ENCODE measurements at regions of chr6 and their contacts with region 1.

Region 1: GRCh38 chr6:106181664-106182418 is 95.7 kb downstream of the PRDM1 start:
- DNase-seq: peak in 1 of 2 experiments; percentile 33
- H3K4me3 ChIP-seq: no peak overlapping the region
- H3K27ac ChIP-seq: no peak overlapping the region
- H3K4me1 ChIP-seq: peaks cover 6% of the 10 kb centered on the region
- H3K27me3 ChIP-seq: no peaks in the 10 kb centered on the region
- CTCF ChIP-seq: no peak

Region 2: GRCh38 chr6:105952772-105953690 is 228.8 kb before region 1 on chr6:
- CTCF ChIA-PET with region 1: no interaction called
- POLR2A ChIA-PET with region 1: no interaction called
- intact Hi-C with region 1: no loop called
- DNase-seq: no peak
- H3K4me3 ChIP-seq: no peak overlapping the region
- H3K27ac ChIP-seq: no peak overlapping the region
- H3K4me1 ChIP-seq: no peaks in the 10 kb centered on the region
- H3K27me3 ChIP-seq: no peaks in the 10 kb centered on the region
- CTCF ChIP-seq: no peak

Region 3: DNA sequence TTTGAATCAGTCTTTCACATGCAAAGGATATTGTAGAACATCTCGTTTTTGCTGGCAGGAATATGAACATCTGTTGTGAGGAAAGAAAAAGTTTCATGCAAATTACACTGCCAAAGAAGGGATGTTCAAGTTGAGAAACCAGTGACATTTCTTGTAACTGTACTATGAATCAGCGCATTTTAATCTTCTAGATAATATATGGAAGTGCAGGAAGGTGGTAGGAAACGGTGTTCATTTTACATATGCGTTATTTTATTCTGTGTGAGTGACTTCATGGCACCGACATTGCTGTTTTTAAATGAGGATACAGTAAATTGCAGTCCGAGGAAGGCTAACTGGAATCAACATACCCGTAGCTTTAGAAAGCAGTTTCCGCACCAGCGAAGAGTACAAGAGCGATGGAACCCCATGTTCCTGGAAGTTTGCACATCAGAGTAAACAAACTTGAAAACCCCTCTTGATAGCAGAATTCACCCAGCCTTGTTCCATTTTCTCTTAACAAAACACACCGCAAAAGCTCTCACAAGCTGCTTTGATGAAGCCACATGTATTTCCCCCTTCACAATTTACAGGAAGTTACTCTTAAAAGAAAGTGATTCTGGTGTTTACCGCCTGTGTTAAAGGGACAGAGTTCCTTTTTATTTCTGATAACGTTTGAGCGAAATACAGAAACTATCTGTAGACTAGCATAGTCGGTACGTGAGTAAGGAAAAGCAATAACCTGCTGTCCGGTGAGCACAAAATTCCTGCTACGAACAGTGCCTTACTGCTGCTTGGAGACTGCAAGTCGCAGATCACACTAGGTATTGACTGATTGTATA is 84.2 kb before region 1 on chr6:
- CTCF ChIA-PET with region 1: no interaction called
- POLR2A ChIA-PET with region 1: no interaction called
- intact Hi-C with region 1: loop called (anchors 5 kb)
- DNase-seq: no peak
- H3K4me3 ChIP-seq: peak overlapping the region; percentile 60
- H3K27ac ChIP-seq: peak overlapping the region; percentile 50
- H3K4me1 ChIP-seq: peaks cover 40% of the 10 kb centered on the region
- H3K27me3 ChIP-seq: no peaks in the 10 kb centered on the region
- CTCF ChIP-seq: no peak

Region 4: GRCh38 chr6:106128981-106129781 is 52.7 kb before region 1 on chr6:
- CTCF ChIA-PET with region 1: no interaction called
- POLR2A ChIA-PET with region 1: no interaction called
- intact Hi-C with region 1: loop called (anchors 5 kb)
- DNase-seq: peak; percentile 60 to 98
- H3K4me3 ChIP-seq: peak overlapping the region; percentile 32; the same call in 1 of the 2 replicates
- H3K27ac ChIP-seq: peak overlapping the region; percentile 84
- H3K4me1 ChIP-seq: peaks cover 34% of the 10 kb centered on the region
- H3K27me3 ChIP-seq: no peaks in the 10 kb centered on the region
- CTCF ChIP-seq: no peak

Region 5: DNA sequence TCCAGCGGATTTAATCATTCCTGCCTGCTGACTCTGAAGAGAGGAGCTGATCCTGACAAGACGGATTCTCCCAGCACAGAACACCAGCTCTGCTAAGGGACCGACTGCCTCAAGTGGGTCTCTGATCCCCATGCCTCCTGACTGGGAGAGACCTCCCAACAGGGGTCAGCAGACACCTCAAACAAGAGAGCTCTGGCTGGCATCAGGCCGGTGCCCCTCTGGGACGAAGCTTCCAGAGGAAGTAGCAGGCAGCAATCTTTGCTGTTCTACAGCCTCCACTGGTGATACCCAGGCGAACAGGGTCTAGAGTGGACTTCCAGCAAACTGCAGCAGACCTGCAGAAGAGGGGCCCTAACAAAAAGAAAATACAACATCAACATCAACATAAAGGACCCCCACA is 81.6 kb after region 1 on chr6:
- CTCF ChIA-PET with region 1: no interaction called
- POLR2A ChIA-PET with region 1: no interaction called
- intact Hi-C with region 1: no loop called
- DNase-seq: no peak
- H3K4me3 ChIP-seq: no peak overlapping the region
- H3K27ac ChIP-seq: no peak overlapping the region
- H3K4me1 ChIP-seq: no peaks in the 10 kb centered on the region; the same call in 1 of the 2 replicates
- H3K27me3 ChIP-seq: no peaks in the 10 kb centered on the region
- CTCF ChIP-seq: no peak

Region 6: DNA sequence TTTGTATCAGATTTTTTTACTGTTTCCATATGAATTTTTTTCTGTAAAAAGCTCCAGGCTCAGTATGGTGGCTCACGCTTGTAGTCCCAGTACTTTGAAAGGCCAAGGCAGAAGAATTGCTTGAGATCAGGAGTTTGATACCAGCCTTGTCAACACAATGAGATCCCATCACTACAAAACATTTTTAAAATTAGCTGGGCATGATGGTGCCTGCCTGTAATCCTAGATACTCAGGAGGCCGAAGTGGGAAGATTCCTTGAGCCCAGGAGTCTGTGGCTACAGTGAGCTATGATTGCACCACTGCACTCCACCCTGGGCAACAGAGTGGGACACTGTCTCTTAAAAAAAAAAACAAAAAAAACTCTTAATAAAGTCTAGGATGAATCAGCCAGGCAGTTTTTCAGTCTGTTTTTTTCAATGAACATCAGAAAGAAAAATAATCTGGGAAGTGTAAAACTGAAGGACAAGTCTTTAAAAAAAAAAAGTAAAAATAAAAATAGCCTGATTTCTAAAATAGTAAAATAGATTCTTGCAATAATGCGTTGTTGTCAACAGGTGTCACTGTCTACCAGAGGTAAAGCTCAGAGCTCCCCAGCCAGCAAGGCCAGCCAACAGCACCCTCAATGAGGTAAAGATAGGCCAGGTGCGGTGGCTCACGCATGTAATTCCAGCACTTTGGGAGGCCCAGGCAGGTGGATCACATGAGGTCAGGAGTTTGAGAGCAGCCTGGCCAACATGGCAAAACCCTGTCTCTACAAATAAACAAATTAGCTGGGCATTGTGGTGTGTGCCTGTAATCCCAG is 153.0 kb after region 1 on chr6:
- CTCF ChIA-PET with region 1: no interaction called
- POLR2A ChIA-PET with region 1: no interaction called
- intact Hi-C with region 1: no loop called
- DNase-seq: peak; percentile 37 to 58
- H3K4me3 ChIP-seq: no peak overlapping the region
- H3K27ac ChIP-seq: no peak overlapping the region
- H3K4me1 ChIP-seq: peaks cover 4% of the 10 kb centered on the region
- H3K27me3 ChIP-seq: no peaks in the 10 kb centered on the region
- CTCF ChIP-seq: peak; percentile 88

Region 7: DNA sequence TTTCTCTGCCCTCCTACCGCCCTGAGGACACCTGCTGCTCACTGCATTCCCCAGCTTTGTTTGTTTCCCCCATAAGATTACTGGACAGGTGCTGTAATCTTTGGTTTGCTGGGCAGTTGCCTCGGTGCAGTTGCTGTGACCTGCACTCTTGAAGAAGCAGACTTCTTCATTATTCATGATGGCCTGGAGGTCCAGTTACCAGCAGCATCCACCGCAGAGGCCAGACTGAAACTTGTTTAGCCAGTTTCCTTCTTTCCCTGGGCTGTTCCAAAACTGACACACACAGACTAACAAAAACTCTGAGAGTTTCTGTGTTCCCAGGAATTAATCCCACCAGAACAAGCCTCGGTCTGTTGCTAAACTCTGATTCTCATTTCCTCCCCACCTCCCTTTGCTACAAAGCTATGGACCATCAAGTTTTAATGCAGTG is 591.7 kb after region 1 on chr6:
- CTCF ChIA-PET with region 1: no interaction called
- POLR2A ChIA-PET with region 1: no interaction called
- intact Hi-C with region 1: no loop called
- DNase-seq: peak; percentile 54 to 90
- H3K4me3 ChIP-seq: peak overlapping the region; percentile 34; the same call in 1 of the 2 replicates
- H3K27ac ChIP-seq: peak overlapping the region; percentile 85
- H3K4me1 ChIP-seq: peaks cover 22% of the 10 kb centered on the region
- H3K27me3 ChIP-seq: no peaks in the 10 kb centered on the region
- CTCF ChIP-seq: no peak